ENCODE measurements at regions of chr6 and their contacts with region 1.

Region 1: GRCh38 chr6:7725849-7726415 is at the start of gene BMP6:
- DNase-seq: peak; percentile 90 to 94 (median 93)
- ATAC-seq: peak; percentile 94 to 96 (median 95)
- H3K4me3 ChIP-seq: peak within 1 kb of the TSS; percentile 54 to 58 (median 58)
- H3K27ac ChIP-seq: no peak within 1 kb of the TSS
- H3K4me1 ChIP-seq: peaks cover 0 to 30% (median 0%) of the 10 kb centered on the region in 4 donors
- H3K27me3 ChIP-seq: peaks cover 0 to 6% of the 10 kb centered on the region in 2 donors
- CTCF ChIP-seq: no peak
- POLR2A ChIP-seq: peak; percentile 31
- total RNA-seq, gene BMP6: 1.8 to 4.4 (median 2.6) TPM

Region 2: GRCh38 chr6:7546020-7546369 is 179.9 kb before region 1 on chr6:
- intact Hi-C with region 1: no loop called
- DNase-seq: no peak
- ATAC-seq: no peak
- H3K4me3 ChIP-seq: no peak overlapping the region
- H3K27ac ChIP-seq: peak overlapping the region in 1 of 3 donors; percentile 86
- H3K4me1 ChIP-seq: peaks cover 0 to 60% (median 21%) of the 10 kb centered on the region in 4 donors
- H3K27me3 ChIP-seq: no peaks in the 10 kb centered on the region
- CTCF ChIP-seq: no peak
- POLR2A ChIP-seq: no peak

Region 3: DNA sequence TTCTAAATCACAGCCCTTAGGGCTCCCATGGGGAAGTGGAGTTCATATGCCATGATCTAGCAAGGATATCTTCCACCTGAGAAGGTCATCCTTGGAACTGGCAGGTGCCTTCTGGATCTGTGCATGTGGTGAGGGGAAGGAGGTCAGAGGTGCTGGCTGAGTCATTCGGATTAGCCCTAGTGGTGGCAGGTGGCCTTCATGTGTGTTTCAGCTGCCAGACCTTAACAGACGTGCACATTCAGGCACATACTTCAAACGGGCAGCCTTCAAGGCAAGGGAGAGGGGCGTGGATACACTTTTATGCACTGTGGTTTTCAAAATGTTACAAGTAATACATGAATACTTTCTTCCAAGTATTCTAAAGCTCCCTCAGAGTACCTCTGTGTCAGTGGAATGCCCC is 51.1 kb after region 1 on chr6:
- intact Hi-C with region 1: no loop called
- DNase-seq: no peak
- ATAC-seq: no peak
- H3K4me3 ChIP-seq: no peak overlapping the region
- H3K27ac ChIP-seq: no peak overlapping the region
- H3K4me1 ChIP-seq: no peaks in the 10 kb centered on the region
- H3K27me3 ChIP-seq: no peaks in the 10 kb centered on the region
- CTCF ChIP-seq: no peak
- POLR2A ChIP-seq: no peak

Region 4: GRCh38 chr6:8000188-8000596 is 274.3 kb after region 1 on chr6:
- intact Hi-C with region 1: loop called in 1 of 2 experiments (anchors 5 kb)
- DNase-seq: no peak
- ATAC-seq: peak; percentile 42 to 85 (median 67)
- H3K4me3 ChIP-seq: no peak overlapping the region
- H3K27ac ChIP-seq: no peak overlapping the region
- H3K4me1 ChIP-seq: no peaks in the 10 kb centered on the region
- H3K27me3 ChIP-seq: no peaks in the 10 kb centered on the region
- CTCF ChIP-seq: no peak
- POLR2A ChIP-seq: no peak

Region 5: DNA sequence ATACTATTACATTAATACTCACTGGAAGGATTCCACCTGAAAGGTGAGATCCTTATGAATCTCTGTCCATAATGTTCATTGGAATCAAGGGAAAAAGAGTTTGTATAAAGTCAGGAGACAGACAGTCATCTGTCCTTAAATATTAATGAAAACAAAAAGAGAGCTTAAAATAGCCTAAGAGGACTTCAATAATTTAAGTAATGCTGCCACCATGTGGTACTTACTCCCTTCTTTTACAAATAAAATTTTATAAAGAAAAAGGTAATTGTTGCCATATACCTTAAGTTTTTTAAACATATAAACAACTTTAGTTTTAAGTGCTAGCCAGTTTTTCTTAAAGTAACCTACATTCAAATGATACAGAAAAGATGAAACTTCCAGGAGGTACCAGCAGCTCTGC is 333.2 kb after region 1 on chr6:
- intact Hi-C with region 1: no loop called
- DNase-seq: no peak
- ATAC-seq: no peak
- H3K4me3 ChIP-seq: no peak overlapping the region
- H3K27ac ChIP-seq: no peak overlapping the region
- H3K4me1 ChIP-seq: no peaks in the 10 kb centered on the region
- H3K27me3 ChIP-seq: no peaks in the 10 kb centered on the region
- CTCF ChIP-seq: peak in 3 of 4 donors; percentile 36 to 43 (median 39)
- POLR2A ChIP-seq: no peak

Measured in right lobe of liver (tissue), 6 donors.